ENCODE measurements at regions of chr18 and their contacts with region 1.

Region 1: DNA sequence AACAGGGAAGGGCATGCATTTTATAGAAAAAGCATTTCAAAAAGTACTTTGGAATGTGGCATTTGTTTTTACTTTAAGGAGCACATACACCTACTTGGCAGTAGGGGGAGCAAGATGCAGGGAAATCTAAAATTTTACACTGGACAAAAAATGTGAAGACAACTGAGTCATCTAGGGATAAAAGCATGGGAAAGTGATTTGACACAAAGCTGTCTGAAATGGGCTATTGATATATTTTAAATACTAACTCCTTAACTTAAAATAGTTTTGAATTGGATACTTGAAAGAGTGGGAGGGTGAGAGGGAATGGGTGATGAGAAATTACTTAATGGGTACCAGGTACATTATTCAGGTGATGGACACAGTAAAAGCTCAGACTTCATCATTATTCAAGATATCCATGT is 15.8 kb downstream of the TMEM200C start:
- DNase-seq: no peak
- H3K4me3 Mint-ChIP-seq: no peak overlapping the region
- H3K27ac Mint-ChIP-seq: no peak overlapping the region
- H3K4me1 Mint-ChIP-seq: no peaks in the 10 kb centered on the region
- H3K27me3 Mint-ChIP-seq: peaks cover 6% of the 10 kb centered on the region

Region 2: DNA sequence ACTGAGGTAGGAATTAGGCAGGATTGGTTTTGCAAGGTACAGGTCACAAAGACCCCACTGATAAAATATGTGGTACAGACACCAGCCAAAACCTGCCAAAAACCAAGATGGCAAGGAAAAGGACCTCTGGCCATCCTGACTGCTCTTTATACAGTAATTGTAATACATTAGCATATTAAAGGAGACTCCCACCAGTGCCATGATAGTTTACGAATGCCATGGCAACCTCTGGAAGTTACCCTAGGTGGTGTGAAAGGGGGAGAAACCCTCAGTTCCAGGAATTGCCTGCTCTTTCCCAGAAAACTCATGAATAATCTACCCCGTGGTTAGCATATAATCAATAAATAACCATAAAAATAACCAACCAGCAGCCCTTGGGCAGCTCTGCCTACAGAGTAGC is 205.9 kb before region 1 on chr18:
- intact Hi-C with region 1: no loop called
- DNase-seq: no peak
- H3K4me3 Mint-ChIP-seq: no peak overlapping the region
- H3K27ac Mint-ChIP-seq: no peak overlapping the region
- H3K4me1 Mint-ChIP-seq: no peaks in the 10 kb centered on the region
- H3K27me3 Mint-ChIP-seq: no peaks in the 10 kb centered on the region

Region 3: GRCh38 chr18:5841518-5841917 is 38.0 kb before region 1 on chr18:
- intact Hi-C with region 1: no loop called
- DNase-seq: no peak
- H3K4me3 Mint-ChIP-seq: no peak overlapping the region
- H3K27ac Mint-ChIP-seq: no peak overlapping the region
- H3K4me1 Mint-ChIP-seq: no peaks in the 10 kb centered on the region
- H3K27me3 Mint-ChIP-seq: no peaks in the 10 kb centered on the region

Region 4: GRCh38 chr18:5995626-5996025 is 116.1 kb after region 1 on chr18:
- intact Hi-C with region 1: no loop called
- DNase-seq: no peak
- H3K4me3 Mint-ChIP-seq: no peak overlapping the region
- H3K27ac Mint-ChIP-seq: no peak overlapping the region
- H3K4me1 Mint-ChIP-seq: peaks cover 1% of the 10 kb centered on the region
- H3K27me3 Mint-ChIP-seq: peaks cover 4% of the 10 kb centered on the region

Region 5: DNA sequence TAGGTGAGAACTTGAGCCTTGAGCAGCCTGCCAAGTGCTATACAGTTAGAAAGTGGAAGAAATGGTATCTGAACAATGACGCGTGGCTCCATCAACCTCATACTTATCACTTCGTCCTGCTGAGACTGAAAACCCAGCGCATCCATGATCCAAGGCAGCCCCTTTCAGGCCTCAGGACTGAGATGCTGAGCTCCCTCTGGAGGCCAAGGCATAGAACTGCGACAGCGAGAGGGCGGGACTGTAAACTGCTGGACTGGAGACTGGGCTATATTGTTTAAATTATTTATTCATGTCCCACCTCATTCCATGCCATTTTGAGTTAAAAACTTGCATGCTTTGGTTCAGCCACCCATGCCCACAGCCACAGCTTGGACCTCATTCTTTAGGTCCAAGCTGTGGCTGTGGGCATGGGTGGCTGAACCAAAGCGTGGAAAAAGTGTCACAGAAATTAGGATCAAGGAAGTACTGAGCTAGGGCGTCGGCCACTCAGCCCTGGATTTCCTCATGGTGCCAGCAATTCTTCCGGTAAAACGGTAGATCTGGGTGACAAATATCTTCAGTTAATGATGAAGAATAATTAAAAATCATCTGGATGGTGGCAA is 339.7 kb after region 1 on chr18:
- intact Hi-C with region 1: loop called (anchors 5 kb)
- DNase-seq: peak; percentile 64
- H3K4me3 Mint-ChIP-seq: no peak overlapping the region
- H3K27ac Mint-ChIP-seq: no peak overlapping the region
- H3K4me1 Mint-ChIP-seq: no peaks in the 10 kb centered on the region
- H3K27me3 Mint-ChIP-seq: no peaks in the 10 kb centered on the region

Region 6: GRCh38 chr18:6521795-6522418 is 642.4 kb after region 1 on chr18:
- intact Hi-C with region 1: loop called (anchors 2 kb)
- DNase-seq: peak; percentile 75
- H3K4me3 Mint-ChIP-seq: no peak overlapping the region
- H3K27ac Mint-ChIP-seq: no peak overlapping the region
- H3K4me1 Mint-ChIP-seq: no peaks in the 10 kb centered on the region
- H3K27me3 Mint-ChIP-seq: no peaks in the 10 kb centered on the region